CD4-positive, alpha-beta memory T cell (primary cell): ENCODE measurements at regions of chr15 and their contacts with region 1.

Region 1: GRCh38 chr15:90954712-90955671 is at the start of gene RCCD1:
- DNase-seq: peak; percentile 84 to 91 (median 85)
- H3K4me3 ChIP-seq: peak within 1 kb of the TSS; percentile 90 to 98
- H3K4me3 Mint-ChIP-seq: peak within 1 kb of the TSS; percentile 85 to 92 (median 88)
- H3K27ac ChIP-seq: peak within 1 kb of the TSS; percentile 94
- H3K27ac Mint-ChIP-seq: peak within 1 kb of the TSS; percentile 82 to 98 (median 95)
- H3K4me1 ChIP-seq: peaks cover 15% of the 10 kb centered on the region
- H3K4me1 Mint-ChIP-seq: peaks cover 6 to 26% (median 18%) of the 10 kb centered on the region in 4 donors
- H3K27me3 ChIP-seq: no peaks in the 10 kb centered on the region
- H3K27me3 Mint-ChIP-seq: no peaks in the 10 kb centered on the region
- total RNA-seq, gene RCCD1: 14.0 to 15.6 TPM

Region 2: GRCh38 chr15:90902040-90902839 is 52.8 kb before region 1 on chr15:
- CTCF ChIA-PET with region 1: interaction called, 21 read pairs
- POLR2A ChIA-PET with region 1: interaction called, 12 read pairs
- intact Hi-C with region 1: loop called (anchors 1 kb)
- DNase-seq: peak; percentile 73 to 79 (median 75)
- H3K4me3 ChIP-seq: peak overlapping the region; percentile 61 to 80
- H3K4me3 Mint-ChIP-seq: peak overlapping the region; percentile 76 to 95 (median 92)
- H3K27ac ChIP-seq: peak overlapping the region; percentile 68
- H3K27ac Mint-ChIP-seq: peak overlapping the region; percentile 85 to 96 (median 94)
- H3K4me1 ChIP-seq: peaks cover 16% of the 10 kb centered on the region
- H3K4me1 Mint-ChIP-seq: peaks cover 10 to 38% (median 26%) of the 10 kb centered on the region in 4 donors
- H3K27me3 ChIP-seq: no peaks in the 10 kb centered on the region
- H3K27me3 Mint-ChIP-seq: no peaks in the 10 kb centered on the region

Region 3: GRCh38 chr15:90986807-90987507 is 32.0 kb after region 1 on chr15:
- CTCF ChIA-PET with region 1: interaction called, 16 read pairs
- POLR2A ChIA-PET with region 1: no interaction called
- intact Hi-C with region 1: no loop called
- DNase-seq: no peak
- H3K4me3 ChIP-seq: no peak overlapping the region
- H3K4me3 Mint-ChIP-seq: peak overlapping the region in 1 of 8 donors; percentile 36
- H3K27ac ChIP-seq: no peak overlapping the region
- H3K27ac Mint-ChIP-seq: peak overlapping the region in 2 of 7 donors; percentile 13 to 50
- H3K4me1 ChIP-seq: peaks cover 17% of the 10 kb centered on the region
- H3K4me1 Mint-ChIP-seq: peaks cover 15 to 34% (median 25%) of the 10 kb centered on the region in 4 donors
- H3K27me3 ChIP-seq: no peaks in the 10 kb centered on the region
- H3K27me3 Mint-ChIP-seq: no peaks in the 10 kb centered on the region

Region 4: DNA sequence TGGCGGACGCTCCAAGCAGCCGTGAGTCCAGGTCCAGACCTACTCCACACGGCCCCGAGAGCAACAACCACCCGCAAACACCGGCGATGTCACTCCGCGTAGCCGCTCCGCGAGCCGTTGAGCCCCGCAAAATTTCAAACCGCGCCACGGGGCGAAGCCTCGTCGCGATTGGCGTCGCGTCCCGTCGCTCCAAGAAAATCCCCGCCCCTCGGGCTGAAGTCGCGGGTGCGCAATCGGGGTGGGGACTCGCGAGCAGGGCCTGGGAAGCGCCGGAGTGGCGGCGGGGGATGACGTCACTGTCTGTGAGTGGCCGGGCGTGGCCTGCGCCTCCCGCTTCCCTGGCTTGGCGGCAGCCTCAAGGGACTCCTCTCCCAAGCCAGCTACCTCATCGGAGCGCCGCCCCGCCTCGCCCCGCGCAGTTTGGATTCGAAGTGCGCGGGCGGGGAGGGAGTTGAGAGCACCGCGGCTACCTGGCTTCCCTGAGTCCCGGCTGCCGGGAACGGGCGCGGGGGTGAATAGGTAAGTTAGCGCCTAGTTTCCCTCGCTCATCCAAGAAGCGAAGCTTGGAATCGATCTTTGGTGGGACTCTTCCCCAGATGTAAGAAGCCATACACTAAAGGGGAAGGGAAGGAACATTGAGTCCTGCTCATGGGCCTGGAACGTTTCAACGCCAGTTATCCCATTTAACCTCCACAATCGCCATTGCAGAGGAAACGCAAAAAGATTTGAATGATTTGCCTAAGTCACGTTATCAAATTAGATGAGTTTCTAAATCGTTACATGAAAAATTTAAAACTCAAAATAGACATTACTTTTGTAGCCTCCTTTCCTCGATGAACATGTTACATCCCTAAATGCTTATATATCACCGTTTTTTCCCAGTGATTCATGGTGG is 39.7 kb after region 1 on chr15 and contains the start of gene PRC1:
- CTCF ChIA-PET with region 1: interaction called, 5 read pairs
- POLR2A ChIA-PET with region 1: interaction called, 3 read pairs
- intact Hi-C with region 1: loop called (anchors 1 kb)
- DNase-seq: peak; percentile 96 to 98 (median 97)
- H3K4me3 ChIP-seq: peak within 1 kb of the TSS; percentile 73 to 90
- H3K4me3 Mint-ChIP-seq: peak within 1 kb of the TSS; percentile 98 to 100 (median 99)
- H3K27ac ChIP-seq: peak within 1 kb of the TSS; percentile 88
- H3K27ac Mint-ChIP-seq: peak within 1 kb of the TSS; percentile 79 to 99 (median 99)
- H3K4me1 ChIP-seq: peaks cover 9% of the 10 kb centered on the region
- H3K4me1 Mint-ChIP-seq: peaks cover 7 to 32% (median 21%) of the 10 kb centered on the region in 4 donors
- H3K27me3 ChIP-seq: no peaks in the 10 kb centered on the region
- H3K27me3 Mint-ChIP-seq: no peaks in the 10 kb centered on the region
- total RNA-seq, gene PRC1: 8.1 to 8.6 TPM

Region 5: DNA sequence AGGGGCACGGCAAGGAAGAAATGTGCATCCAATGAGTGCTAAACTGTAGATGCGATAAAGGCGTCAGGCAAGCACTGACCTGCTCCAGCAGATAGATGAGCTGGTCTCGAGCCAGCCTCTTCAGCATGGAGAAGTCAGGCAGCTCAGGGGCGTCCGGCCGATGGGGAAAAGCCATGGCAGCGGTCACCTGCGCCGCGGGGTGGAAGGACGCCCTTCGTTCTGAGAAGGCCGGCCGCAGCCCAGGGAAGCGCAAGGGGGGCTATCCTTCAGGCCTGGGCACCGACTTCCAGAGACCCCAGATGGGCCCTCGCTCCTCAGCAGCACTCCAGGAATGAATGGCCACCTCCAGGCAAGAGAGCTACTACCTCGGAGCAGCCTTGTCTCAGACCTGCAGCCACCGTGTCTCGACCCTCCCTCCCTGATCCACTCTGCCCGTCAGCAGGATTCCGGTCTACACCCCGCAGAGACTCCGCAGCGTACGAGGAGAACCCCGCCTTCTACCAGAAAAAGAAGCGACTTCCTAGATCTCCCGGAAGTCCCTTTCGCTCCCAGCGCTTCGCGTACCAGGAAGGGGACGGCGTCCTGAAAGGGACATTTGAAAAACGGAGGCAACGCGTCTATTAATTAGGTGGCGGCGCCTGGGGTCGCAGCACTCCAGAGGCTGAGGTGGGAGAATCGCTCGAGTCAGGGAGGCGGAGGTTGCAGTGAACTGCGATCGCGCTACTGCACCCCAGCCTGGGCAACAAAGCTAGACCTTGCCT is 67.3 kb after region 1 on chr15 and contains the start of gene VPS33B:
- CTCF ChIA-PET with region 1: interaction called, 9 read pairs
- POLR2A ChIA-PET with region 1: interaction called, 5 read pairs
- intact Hi-C with region 1: loop called (anchors 2 kb)
- DNase-seq: peak; percentile 78 to 83 (median 80)
- H3K4me3 ChIP-seq: peak within 1 kb of the TSS; percentile 80 to 82
- H3K4me3 Mint-ChIP-seq: peak within 1 kb of the TSS; percentile 96 to 99 (median 98)
- H3K27ac ChIP-seq: peak within 1 kb of the TSS; percentile 83
- H3K27ac Mint-ChIP-seq: peak within 1 kb of the TSS; percentile 88 to 98 (median 97)
- H3K4me1 ChIP-seq: peaks cover 34% of the 10 kb centered on the region
- H3K4me1 Mint-ChIP-seq: peaks cover 31 to 57% (median 41%) of the 10 kb centered on the region in 4 donors
- H3K27me3 ChIP-seq: no peaks in the 10 kb centered on the region
- H3K27me3 Mint-ChIP-seq: no peaks in the 10 kb centered on the region
- total RNA-seq, gene VPS33B: 26.9 to 27.8 TPM

Region 6: DNA sequence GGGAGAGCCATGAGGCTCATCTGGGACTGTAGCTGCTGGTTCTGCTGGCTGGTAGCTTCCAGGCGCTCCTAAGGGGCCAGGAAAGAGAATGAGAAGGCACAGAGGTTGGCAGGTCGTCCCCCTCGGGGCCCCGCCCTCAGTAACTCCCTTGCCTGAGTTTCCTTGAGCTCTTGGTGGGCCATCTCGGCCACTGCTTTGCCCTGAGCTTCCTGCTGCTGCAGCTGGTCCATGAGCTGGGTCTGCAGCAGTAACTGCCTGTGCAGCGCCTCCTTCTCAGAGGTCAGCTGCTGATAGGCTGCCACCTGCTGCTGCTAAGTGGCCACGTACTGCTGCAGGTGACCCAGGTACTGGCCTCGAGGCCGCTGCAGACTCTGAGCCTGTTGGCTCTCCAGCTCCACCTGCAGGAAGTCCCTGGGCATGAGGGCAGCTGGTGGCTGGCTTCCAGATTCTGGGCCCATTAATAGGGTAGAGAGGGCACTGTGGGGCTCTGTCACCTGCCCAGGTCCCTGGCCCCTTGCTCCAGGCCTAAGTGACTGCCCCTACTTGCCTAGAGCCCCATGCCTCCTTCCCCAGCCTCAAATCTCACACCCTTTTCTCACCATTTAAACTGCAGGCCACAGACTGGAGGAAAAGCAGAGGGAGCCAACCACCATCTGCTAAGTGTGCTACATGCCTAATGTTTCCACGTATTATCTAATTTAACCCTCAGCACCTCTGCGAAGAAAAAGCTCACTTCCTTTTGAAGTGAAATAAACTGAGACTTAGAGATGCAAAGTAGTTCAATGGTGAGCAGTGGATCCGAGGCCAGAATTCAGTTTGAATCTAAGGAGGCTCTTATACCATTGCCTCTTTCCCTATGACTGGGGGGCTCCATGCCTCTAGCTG is 78.2 kb after region 1 on chr15:
- CTCF ChIA-PET with region 1: interaction called, 35 read pairs
- POLR2A ChIA-PET with region 1: interaction called, 6 read pairs
- intact Hi-C with region 1: loop called (anchors 2 kb)
- DNase-seq: peak; percentile 40 to 54 (median 46)
- H3K4me3 ChIP-seq: no peak overlapping the region
- H3K4me3 Mint-ChIP-seq: no peak overlapping the region
- H3K27ac ChIP-seq: no peak overlapping the region
- H3K27ac Mint-ChIP-seq: peak overlapping the region in 3 of 7 donors; percentile 49 to 59 (median 50)
- H3K4me1 ChIP-seq: no peaks in the 10 kb centered on the region
- H3K4me1 Mint-ChIP-seq: peaks cover 1 to 13% (median 5%) of the 10 kb centered on the region in 4 donors
- H3K27me3 ChIP-seq: no peaks in the 10 kb centered on the region
- H3K27me3 Mint-ChIP-seq: no peaks in the 10 kb centered on the region

Region 7: GRCh38 chr15:91049378-91050127 is 94.6 kb after region 1 on chr15:
- CTCF ChIA-PET with region 1: interaction called, 34 read pairs
- POLR2A ChIA-PET with region 1: interaction called, 7 read pairs
- intact Hi-C with region 1: loop called (anchors 1 kb)
- DNase-seq: peak; percentile 50 to 66 (median 60)
- H3K4me3 ChIP-seq: no peak overlapping the region
- H3K4me3 Mint-ChIP-seq: no peak overlapping the region
- H3K27ac ChIP-seq: no peak overlapping the region
- H3K27ac Mint-ChIP-seq: no peak overlapping the region
- H3K4me1 ChIP-seq: peaks cover 21% of the 10 kb centered on the region
- H3K4me1 Mint-ChIP-seq: peaks cover 11 to 30% (median 26%) of the 10 kb centered on the region in 4 donors
- H3K27me3 ChIP-seq: no peaks in the 10 kb centered on the region
- H3K27me3 Mint-ChIP-seq: peaks cover 8 to 10% of the 10 kb centered on the region in 2 donors